PC-9 (cell line): ENCODE measurements at regions of chr1 and their contacts with region 1.

Region 1: GRCh38 chr1:85406887-85407533 is 57.9 kb downstream of the DDAH1 start:
- DNase-seq: peak; percentile 47 to 87
- H3K4me3 ChIP-seq: no peak overlapping the region
- H3K27ac ChIP-seq: peak overlapping the region; percentile 28
- H3K4me1 ChIP-seq: peaks cover 20% of the 10 kb centered on the region
- H3K27me3 ChIP-seq: no peaks in the 10 kb centered on the region
- CTCF ChIP-seq: no peak

Region 2: GRCh38 chr1:85334962-85335361 is 72.0 kb before region 1 on chr1:
- CTCF ChIA-PET with region 1: no interaction called
- POLR2A ChIA-PET with region 1: interaction called, 4 read pairs
- intact Hi-C with region 1: loop called (anchors 5 kb)
- DNase-seq: no peak
- H3K4me3 ChIP-seq: no peak overlapping the region
- H3K27ac ChIP-seq: no peak overlapping the region
- H3K4me1 ChIP-seq: peaks cover 29% of the 10 kb centered on the region
- H3K27me3 ChIP-seq: no peaks in the 10 kb centered on the region
- CTCF ChIP-seq: no peak